Left lung (tissue), 14 donors: ENCODE measurements at regions of chr14 and their contacts with region 1.

Region 1: GRCh38 chr14:105351920-105352851 is 37.6 kb downstream of the PACS2 start:
- DNase-seq: peak; percentile 62 to 87 (median 84)
- ATAC-seq: peak; percentile 98
- H3K4me3 ChIP-seq: no peak overlapping the region
- H3K27ac ChIP-seq: no peak overlapping the region
- H3K4me1 ChIP-seq: peaks cover 5 to 6% of the 10 kb centered on the region in 2 donors
- H3K27me3 ChIP-seq: no peaks in the 10 kb centered on the region
- CTCF ChIP-seq: peak; percentile 80 to 92

Region 2: GRCh38 chr14:105090493-105091053 is 261.6 kb before region 1 on chr14:
- intact Hi-C with region 1: loop called in 1 of 2 experiments (anchors 10 kb)
- DNase-seq: peak in 3 of 4 donors; percentile 80 to 99 (median 84)
- ATAC-seq: peak; percentile 33
- H3K4me3 ChIP-seq: no peak overlapping the region
- H3K27ac ChIP-seq: peak overlapping the region; percentile 79 to 84
- H3K4me1 ChIP-seq: peaks cover 41 to 81% of the 10 kb centered on the region in 2 donors
- H3K27me3 ChIP-seq: peaks cover 0 to 71% of the 10 kb centered on the region in 2 donors
- CTCF ChIP-seq: peak; percentile 97 to 99

Region 3: GRCh38 chr14:105203057-105203531 is 149.1 kb before region 1 on chr14:
- intact Hi-C with region 1: loop called in 1 of 2 experiments (anchors 5 kb)
- DNase-seq: peak; percentile 65 to 95 (median 73)
- ATAC-seq: peak; percentile 64
- H3K4me3 ChIP-seq: no peak overlapping the region
- H3K27ac ChIP-seq: no peak overlapping the region
- H3K4me1 ChIP-seq: peaks cover 15 to 46% of the 10 kb centered on the region in 2 donors
- H3K27me3 ChIP-seq: peaks cover 0 to 41% of the 10 kb centered on the region in 2 donors
- CTCF ChIP-seq: peak; percentile 90 to 97